H1 (cell line): ENCODE measurements at regions of chr1 and their contacts with region 1.

Region 1: DNA sequence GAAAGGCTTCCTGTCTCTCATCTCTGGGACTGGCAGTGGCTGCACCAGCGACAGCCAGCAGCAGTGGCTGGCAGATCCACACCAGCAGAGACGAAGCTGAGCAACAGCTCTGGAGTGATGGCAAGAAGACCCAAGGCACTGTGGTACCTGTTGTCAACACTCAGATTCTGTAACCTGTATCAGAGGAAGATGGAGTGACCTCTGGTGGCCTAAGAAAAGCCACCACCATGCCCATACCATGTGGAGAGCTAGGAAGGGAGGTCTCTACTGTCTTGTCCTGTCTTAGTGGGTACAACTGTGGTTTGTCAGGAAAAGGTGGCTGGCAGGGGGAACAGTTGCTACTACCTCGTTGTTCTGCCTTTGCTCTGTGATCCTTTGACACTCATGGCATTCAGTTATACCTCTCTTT is 22.5 kb upstream of the RHBDL2 start:
- DNase-seq: no peak
- H3K4me3 ChIP-seq: no peak overlapping the region
- H3K27ac ChIP-seq: no peak overlapping the region
- H3K4me1 ChIP-seq: no peaks in the 10 kb centered on the region
- H3K27me3 ChIP-seq: no peaks in the 10 kb centered on the region
- CTCF ChIP-seq: peak; percentile 8 to 75 (median 42)
- EP300 ChIP-seq: no peak
- POLR2A ChIP-seq: no peak
- RAD21 ChIP-seq: peak; percentile 63 to 72

Region 2: DNA sequence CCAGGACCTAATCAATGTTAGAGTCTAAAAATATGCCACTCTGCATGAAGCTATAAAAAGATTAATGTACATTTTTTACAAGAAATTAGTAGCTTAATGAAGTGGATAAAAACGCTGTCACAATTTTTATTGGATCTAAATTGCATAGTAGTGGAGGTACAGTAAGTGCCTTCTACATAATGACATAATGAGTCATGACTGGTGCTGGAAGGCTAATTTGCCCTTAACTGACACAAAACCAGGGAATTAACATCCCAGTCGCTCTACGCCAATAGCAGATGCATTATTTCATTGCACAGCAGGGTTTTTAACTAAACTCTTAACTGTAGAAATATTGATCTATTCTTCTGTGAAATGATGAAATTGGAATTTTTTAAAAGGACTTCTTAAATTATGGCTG is 137.9 kb before region 1 on chr1:
- CTCF ChIA-PET with region 1: no interaction called
- POLR2A ChIA-PET with region 1: no interaction called
- DNase-seq: no peak
- H3K4me3 ChIP-seq: no peak overlapping the region
- H3K27ac ChIP-seq: no peak overlapping the region
- H3K4me1 ChIP-seq: no peaks in the 10 kb centered on the region
- H3K27me3 ChIP-seq: no peaks in the 10 kb centered on the region; a peak in 1 of 7 replicates
- CTCF ChIP-seq: no peak
- EP300 ChIP-seq: no peak
- POLR2A ChIP-seq: no peak
- RAD21 ChIP-seq: no peak

Region 3: GRCh38 chr1:38891753-38892152 is 72.4 kb before region 1 on chr1:
- CTCF ChIA-PET with region 1: interaction called, 10 read pairs
- POLR2A ChIA-PET with region 1: no interaction called
- DNase-seq: peak; percentile 5 to 44
- H3K4me3 ChIP-seq: no peak overlapping the region
- H3K27ac ChIP-seq: no peak overlapping the region
- H3K4me1 ChIP-seq: peaks cover 0 to 2% (median under 1%) of the 10 kb centered on the region in 4 experiments; a peak in 2 of 7 replicates
- H3K27me3 ChIP-seq: no peaks in the 10 kb centered on the region; a peak in 1 of 7 replicates
- CTCF ChIP-seq: peak; percentile 47 to 72 (median 49); a peak in 3 of 4 replicates
- EP300 ChIP-seq: no peak
- POLR2A ChIP-seq: no peak
- RAD21 ChIP-seq: peak; percentile 65 to 73

Region 4: DNA sequence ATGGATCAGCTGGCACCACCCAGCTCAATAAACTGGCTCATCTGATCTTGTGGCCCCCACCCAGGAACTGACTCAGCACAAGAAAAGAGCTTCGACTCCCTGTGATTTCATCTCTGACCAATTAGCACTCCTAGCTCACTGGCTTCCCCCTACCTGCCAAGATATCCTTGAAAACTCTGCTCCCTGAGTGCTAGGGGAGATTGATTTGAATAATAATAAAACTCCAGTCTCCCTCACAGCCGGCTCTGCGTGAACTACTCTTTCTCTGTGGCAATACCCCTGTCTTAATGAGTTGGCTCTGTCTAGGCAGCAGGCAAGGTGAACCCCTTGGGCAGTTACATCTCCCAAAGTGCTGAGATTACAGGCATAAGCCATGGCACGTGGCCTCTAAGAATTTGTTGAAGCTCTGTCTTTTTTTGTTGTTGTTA is 10.7 kb before region 1 on chr1:
- CTCF ChIA-PET with region 1: interaction called, 11 read pairs
- POLR2A ChIA-PET with region 1: interaction called, 3 read pairs
- DNase-seq: peak; percentile 58 to 63
- H3K4me3 ChIP-seq: no peak overlapping the region
- H3K27ac ChIP-seq: peak overlapping the region; percentile 52
- H3K4me1 ChIP-seq: peaks cover 0 to 7% (median 0%) of the 10 kb centered on the region in 4 experiments; a peak in 3 of 7 replicates
- H3K27me3 ChIP-seq: no peaks in the 10 kb centered on the region
- CTCF ChIP-seq: no peak
- EP300 ChIP-seq: peak in 1 of 2 experiments; percentile 78; a peak in 2 of 3 replicates
- POLR2A ChIP-seq: peak in 1 of 2 experiments; percentile 45; a peak in 1 of 3 replicates
- RAD21 ChIP-seq: no peak

Region 5: GRCh38 chr1:39043513-39043912 is 79.4 kb after region 1 on chr1:
- CTCF ChIA-PET with region 1: no interaction called
- POLR2A ChIA-PET with region 1: no interaction called
- DNase-seq: no peak
- H3K4me3 ChIP-seq: no peak overlapping the region
- H3K27ac ChIP-seq: no peak overlapping the region
- H3K4me1 ChIP-seq: no peaks in the 10 kb centered on the region
- H3K27me3 ChIP-seq: no peaks in the 10 kb centered on the region
- CTCF ChIP-seq: no peak
- EP300 ChIP-seq: no peak
- POLR2A ChIP-seq: no peak
- RAD21 ChIP-seq: no peak